SK-N-SH (cell line): ENCODE measurements at regions of chr17 and their contacts with region 1.

Region 1: DNA sequence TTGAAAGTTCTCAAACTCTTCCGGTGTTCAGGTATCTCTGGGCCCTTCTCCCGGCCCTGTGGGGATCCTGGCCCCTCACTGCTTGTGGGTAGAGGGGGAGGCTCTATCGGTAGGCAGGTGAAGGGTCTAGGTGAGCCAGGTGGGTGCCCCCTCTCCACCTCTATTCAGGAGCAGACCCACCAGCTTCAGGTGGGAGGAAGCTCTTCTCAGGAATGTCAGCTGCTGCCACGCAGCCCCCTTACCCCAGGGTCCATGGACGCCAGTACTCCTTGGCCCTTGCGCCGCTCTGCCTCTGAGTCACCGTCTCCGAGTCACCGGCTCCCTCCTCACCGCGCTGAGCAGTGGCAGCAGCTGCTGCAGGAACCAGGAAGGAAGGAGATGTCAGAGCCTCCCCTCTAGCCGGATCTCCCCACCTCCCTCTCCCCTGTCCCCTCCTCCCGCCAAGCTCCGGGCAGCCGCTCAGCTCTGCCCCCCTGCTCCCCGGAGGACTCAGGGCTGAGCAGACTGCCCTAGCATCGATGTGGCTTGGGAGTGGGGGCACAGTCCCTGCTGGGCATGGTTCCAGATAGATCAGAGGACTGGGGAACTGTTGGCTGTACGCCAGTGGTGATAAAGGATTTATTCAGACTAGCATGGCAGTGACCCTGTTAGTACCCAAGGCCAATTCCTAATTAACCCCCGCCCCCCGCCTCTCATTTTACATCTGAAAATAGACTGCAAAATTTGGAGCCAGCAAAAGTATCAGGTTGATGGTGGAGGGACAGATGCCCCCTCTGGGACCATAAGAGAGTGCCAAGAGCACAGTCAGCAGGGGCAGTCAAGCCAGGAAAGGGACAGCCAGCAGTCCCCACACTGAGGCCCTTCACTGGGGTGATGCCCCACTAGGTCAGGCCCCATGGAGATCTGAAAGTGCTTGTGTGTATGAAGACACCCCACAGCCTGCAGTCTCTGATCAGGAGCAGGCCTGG is at the start of gene OSBPL7:
- DNase-seq: peak; percentile 99
- H3K4me3 ChIP-seq: peak within 1 kb of the TSS; percentile 90 to 93
- H3K27ac ChIP-seq: peak within 1 kb of the TSS; percentile 37 to 88
- H3K4me1 ChIP-seq: peaks cover 11 to 26% of the 10 kb centered on the region in 2 experiments; a peak in 3 of 4 replicates
- H3K27me3 ChIP-seq: no peaks in the 10 kb centered on the region
- CTCF ChIP-seq: peak; percentile 57
- EP300 ChIP-seq: no peak
- RAD21 ChIP-seq: peak; percentile 15; the same call in 1 of the 2 replicates
- polyA plus RNA-seq, gene OSBPL7: 23.7 and 24.7 TPM in 2 replicates

Region 2: DNA sequence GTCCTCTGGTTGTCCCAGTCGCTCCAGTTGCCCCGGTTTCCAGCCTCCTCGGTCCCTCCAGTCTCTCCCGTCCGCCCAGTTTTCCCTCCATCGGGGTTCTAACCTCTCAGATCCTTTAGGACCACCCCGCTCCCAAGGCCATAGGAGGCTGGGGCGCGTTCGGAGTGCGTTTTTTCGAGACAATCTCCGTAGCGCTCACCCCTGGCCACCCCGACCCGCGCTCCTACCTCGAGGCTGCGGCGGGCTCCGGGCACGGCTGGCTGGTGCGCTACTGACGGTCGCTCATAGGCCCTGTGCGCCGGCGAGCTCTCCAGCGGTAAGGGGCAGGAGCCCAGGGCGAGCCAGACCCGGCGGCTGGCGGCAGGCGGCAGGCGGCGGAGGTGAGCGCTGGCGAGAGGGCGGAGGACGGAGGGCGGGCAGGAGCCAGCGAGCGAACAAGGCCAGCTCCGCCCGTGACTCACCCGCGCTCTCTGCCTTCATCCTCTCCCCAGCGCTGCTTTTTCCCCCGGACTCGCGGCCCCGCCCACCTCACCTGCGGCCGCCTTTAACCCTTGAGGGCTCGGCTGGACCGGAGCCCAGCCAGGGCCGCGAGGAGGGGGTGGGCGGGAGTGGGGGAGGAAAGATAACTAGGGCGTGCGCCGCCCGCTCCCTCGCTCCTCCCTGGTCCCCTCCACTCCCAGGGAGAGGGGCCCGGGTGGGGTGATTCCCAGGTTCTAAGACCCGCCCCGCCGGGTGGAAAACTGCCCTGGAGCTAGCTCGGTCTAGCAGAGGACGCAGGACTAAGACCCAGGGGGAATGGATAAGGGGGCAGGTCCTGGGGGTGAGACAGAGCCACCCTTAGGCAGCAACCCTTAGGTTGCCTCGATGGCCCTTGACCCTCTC is 29.2 kb after region 1 on chr17 and contains the start of gene SP6:
- CTCF ChIA-PET with region 1: interaction called, 573 read pairs
- POLR2A ChIA-PET with region 1: no interaction called
- DNase-seq: peak; percentile 89
- H3K4me3 ChIP-seq: peak within 1 kb of the TSS; percentile 11 to 34; a peak in 2 of 4 replicates
- H3K27ac ChIP-seq: no peak within 1 kb of the TSS
- H3K4me1 ChIP-seq: peaks cover 0 to 13% of the 10 kb centered on the region in 2 experiments; a peak in 1 of 4 replicates
- H3K27me3 ChIP-seq: peaks cover 99% of the 10 kb centered on the region
- CTCF ChIP-seq: 0 out of 2 replicates have a peak, but pooled peaks have one; percentile 30
- EP300 ChIP-seq: no peak
- RAD21 ChIP-seq: no peak
- polyA plus RNA-seq, gene SP6: 0.03 TPM in 2 replicates